Psoas muscle (tissue), 8 donors: ENCODE measurements at regions of chr1 and their contacts with region 1.

Region 1: DNA sequence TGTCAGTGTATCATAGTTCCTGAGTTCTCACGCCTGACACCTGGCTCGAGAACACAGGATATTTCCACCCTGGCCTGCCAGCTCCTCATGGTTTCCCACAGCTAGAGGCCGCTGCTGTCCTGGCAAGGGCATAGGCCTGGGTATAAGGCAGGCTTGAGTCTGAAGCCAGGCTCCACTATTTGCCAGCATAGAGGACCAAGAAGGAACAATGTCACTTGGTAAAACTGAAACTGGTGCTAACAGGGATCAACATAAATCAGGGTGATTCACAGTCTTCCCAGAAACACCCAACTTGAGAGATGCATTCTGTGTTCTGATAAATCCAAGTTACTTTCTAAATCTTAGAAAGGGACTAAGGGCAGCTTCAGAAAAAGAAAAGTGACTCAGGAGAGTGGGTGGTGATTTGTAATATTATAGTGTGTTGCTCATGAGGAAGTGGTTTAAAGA is 6.9 kb upstream of the S100A2 start:
- DNase-seq: peak; percentile 82 to 90
- ATAC-seq: peak; percentile 87 to 89 (median 88)
- H3K4me3 ChIP-seq: no peak overlapping the region
- H3K27ac ChIP-seq: peak overlapping the region; percentile 75
- H3K4me1 ChIP-seq: peaks cover 23% of the 10 kb centered on the region
- H3K27me3 ChIP-seq: peaks cover 0 to under 1% (median 0%) of the 10 kb centered on the region in 3 donors
- CTCF ChIP-seq: peak; percentile 90

Region 2: DNA sequence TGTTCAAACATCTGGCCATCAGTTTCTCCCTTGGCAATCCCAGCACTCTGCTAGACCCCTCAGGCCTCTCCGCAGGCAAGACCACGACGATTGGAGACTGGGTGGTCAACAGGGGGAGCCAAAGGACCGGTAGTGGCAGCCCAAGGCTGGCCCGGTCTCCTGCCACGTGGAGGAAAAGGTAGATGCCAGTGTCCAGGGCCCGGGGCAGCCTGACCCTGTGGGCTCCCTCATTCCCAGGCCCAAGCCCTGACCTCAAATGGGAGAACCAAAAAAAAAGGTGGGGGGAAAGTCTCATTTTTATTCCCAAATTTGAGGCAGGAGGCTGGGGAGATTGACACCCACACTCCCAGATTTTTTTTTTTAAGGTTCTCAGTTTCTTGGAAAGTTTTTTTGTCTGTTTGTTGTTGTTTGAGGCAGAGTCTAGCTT is 61.6 kb before region 1 on chr1:
- intact Hi-C with region 1: loop called (anchors 1 to 2 kb)
- DNase-seq: peak; percentile 82 to 89
- ATAC-seq: peak; percentile 82 to 88 (median 85)
- H3K4me3 ChIP-seq: no peak overlapping the region
- H3K27ac ChIP-seq: no peak overlapping the region
- H3K4me1 ChIP-seq: peaks cover 14% of the 10 kb centered on the region
- H3K27me3 ChIP-seq: no peaks in the 10 kb centered on the region
- CTCF ChIP-seq: peak; percentile 92

Region 3: DNA sequence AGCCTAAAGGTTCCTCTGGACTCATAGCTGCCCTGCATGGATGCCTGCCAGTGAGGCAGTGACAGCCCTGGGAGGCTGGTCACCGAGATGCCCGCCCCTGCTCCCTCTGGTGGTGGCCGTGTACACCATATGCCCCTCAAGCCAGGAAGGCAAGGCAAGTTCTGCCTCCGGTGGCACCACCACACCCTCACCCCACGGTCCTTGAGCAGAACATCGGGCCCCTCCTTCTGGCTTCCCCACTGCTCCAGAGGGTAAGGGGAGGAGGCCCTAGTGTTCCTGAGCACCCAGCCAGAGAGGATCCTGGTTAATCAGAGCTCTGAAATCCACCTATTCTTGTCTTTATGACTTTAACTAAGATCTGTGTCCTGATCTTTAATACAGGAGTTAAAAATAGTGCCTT is 45.1 kb after region 1 on chr1:
- intact Hi-C with region 1: loop called (anchors 2 kb)
- DNase-seq: peak; percentile 81 to 95
- ATAC-seq: peak; percentile 73 to 94 (median 80)
- H3K4me3 ChIP-seq: no peak overlapping the region
- H3K27ac ChIP-seq: peak overlapping the region; percentile 50
- H3K4me1 ChIP-seq: peaks cover 8% of the 10 kb centered on the region
- H3K27me3 ChIP-seq: no peaks in the 10 kb centered on the region
- CTCF ChIP-seq: peak; percentile 55

Region 4: DNA sequence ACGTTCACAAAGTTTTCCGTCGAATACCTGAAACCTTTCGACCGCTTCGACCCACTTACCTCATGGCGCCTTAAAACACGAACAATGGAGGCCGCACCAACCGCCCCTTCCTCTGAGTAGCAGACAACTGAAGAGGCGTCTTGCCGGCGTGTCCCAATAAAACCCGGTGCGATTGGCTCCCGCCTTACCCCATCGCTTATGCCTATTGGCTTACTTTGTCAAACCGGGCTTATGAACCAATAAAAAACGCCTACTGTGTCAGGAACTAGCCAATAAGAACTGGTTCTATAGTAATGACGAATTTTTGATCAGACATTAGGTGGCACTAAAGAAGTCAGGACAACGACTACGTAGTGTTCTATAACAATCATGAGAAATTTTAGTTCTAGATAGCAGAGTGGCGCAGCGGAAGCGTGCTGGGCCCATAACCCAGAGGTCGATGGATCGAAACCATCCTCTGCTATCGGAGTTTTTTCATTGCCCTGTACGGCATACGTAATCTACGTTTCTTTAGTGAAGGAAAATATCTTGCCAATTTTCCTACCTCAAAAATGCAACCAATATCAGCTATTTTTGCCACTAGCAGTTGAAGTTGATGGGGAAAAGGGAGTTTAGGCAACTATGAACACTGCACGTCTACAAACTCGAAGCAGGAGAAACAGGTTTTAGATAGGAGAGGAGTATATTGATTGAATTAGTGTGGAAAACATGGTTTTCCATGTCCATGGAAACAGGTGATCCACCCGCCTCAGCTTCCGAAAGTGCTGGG is 98.5 kb after region 1 on chr1 and contains the start of gene ILF2:
- intact Hi-C with region 1: loop called in 1 of 2 experiments (anchors 5 kb)
- DNase-seq: peak; percentile 96 to 99
- ATAC-seq: peak; percentile 92 to 96 (median 94)
- H3K4me3 ChIP-seq: peak within 1 kb of the TSS; percentile 89
- H3K27ac ChIP-seq: peak within 1 kb of the TSS; percentile 88
- H3K4me1 ChIP-seq: peaks cover 13% of the 10 kb centered on the region
- H3K27me3 ChIP-seq: no peaks in the 10 kb centered on the region
- CTCF ChIP-seq: peak; percentile 12
- total RNA-seq, gene ILF2: 71.7 to 102 (median 98.2) TPM

Region 5: GRCh38 chr1:153990468-153991150 is 418.0 kb after region 1 on chr1 and contains the start of gene RPS27:
- intact Hi-C with region 1: loop called in 1 of 2 experiments (anchors 5 kb)
- DNase-seq: peak; percentile 86 to 93
- ATAC-seq: peak; percentile 82 to 85 (median 84)
- H3K4me3 ChIP-seq: peak within 1 kb of the TSS; percentile 93
- H3K27ac ChIP-seq: peak within 1 kb of the TSS; percentile 98
- H3K4me1 ChIP-seq: peaks cover 25% of the 10 kb centered on the region
- H3K27me3 ChIP-seq: no peaks in the 10 kb centered on the region
- CTCF ChIP-seq: no peak
- total RNA-seq, gene RPS27: 653 to 1,325 (median 1,012) TPM